Motor neuron (in vitro differentiated cells): ENCODE measurements at regions of chr11 and their contacts with region 1.

Region 1: DNA sequence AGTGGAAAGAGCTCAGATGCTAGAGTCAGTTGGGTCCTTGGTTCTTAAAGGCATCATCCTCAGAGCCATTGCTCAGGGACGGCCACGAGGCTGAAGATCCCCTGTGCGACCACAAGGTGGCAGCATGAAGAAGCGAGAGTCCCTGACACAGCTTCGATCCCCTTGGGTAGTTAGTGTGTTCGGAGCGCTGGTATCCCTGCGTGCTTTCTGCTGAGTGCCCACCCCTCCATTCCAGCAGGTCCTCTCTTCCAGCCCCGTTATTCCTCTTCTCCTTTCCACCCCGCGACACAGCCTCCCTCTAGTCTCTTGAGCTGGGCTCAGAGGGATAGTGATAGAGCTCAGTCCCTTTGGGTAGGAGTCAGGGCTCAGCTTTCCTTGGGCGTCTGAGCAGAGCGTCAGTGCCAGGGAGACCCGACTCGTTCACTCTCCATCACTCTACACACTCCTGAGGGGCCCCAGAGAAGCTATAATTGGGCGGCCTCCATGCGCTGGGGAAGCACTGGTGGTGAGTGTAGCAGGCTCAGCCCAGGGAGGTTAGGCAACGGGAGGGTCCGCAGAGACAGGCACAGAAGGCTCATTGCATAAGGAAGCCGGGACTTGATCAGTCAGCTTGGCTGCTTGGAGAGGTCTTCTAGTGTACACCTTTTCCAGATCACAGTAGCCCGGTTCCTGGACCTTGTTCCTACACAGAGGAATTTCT is at the start of gene OR51D1:
- ATAC-seq: peak; percentile 83 to 100 (median 91)
- H3K4me3 ChIP-seq: no peak within 1 kb of the TSS
- H3K27ac ChIP-seq: no peak within 1 kb of the TSS
- H3K4me1 ChIP-seq: no peaks in the 10 kb centered on the region
- total RNA-seq, gene OR51D1: 0.05 to 0.52 (median 0.13) TPM in 5 of 8 experiments, not detected in the others

Region 2: GRCh38 chr11:4211991-4212390 is 425.1 kb before region 1 on chr11:
- in situ Hi-C with region 1: no loop called
- ATAC-seq: peak in 2 of 8 experiments; percentile 23 to 44
- H3K4me3 ChIP-seq: no peak overlapping the region
- H3K27ac ChIP-seq: no peak overlapping the region
- H3K4me1 ChIP-seq: no peaks in the 10 kb centered on the region

Region 3: DNA sequence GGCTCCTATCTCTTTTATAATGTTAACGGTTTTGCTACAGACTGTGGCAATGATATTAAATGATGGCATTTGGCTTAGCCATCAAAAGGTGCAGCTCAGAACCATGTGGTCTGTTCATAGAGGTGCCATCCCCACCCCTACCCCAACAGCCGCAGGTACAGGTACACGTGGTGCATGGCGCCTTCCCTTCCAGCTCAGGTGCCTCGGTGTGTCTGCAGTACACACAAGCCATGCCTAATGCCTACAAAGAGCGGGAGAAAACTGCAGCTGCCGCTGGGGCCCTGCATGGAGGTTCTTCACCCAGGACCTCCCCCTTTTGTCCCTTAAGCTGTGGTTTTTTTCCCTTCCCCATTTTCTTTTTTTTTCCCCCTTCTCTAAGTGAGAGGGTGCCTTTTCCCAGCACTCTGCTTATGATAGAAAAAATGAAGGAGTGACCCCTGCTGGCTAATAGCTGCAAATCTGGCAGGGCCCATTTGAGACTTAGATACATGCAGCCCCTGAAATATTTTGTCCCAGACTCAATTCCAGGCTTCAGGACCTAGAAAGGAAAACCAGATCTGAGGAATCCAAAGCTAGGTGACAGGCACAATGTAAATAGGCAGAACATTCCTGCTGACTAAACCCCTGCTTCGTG is 85.6 kb before region 1 on chr11:
- in situ Hi-C with region 1: no loop called
- ATAC-seq: peak in 3 of 8 experiments; percentile 65 to 71 (median 67)
- H3K4me3 ChIP-seq: no peak overlapping the region
- H3K27ac ChIP-seq: no peak overlapping the region
- H3K4me1 ChIP-seq: no peaks in the 10 kb centered on the region

Region 4: DNA sequence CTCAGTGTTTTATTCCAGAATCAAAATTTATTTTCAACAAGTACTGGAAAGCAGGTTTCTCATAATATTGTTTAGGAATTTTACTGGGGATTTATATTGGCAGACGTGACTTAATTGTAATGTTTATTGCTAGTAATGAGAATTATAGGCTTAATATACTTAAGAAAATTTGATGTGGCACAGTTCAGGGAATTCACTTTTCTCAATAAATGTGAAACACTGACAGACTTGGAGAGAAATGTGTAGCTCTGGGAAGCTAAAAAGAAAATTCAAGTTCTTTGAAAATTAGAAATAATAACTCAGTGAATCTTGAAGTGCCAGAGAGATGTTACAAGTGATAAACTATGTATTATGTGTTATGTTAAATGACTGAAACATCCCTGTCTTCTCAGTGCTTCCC is 183.9 kb after region 1 on chr11 and contains the start of gene OR51F2:
- in situ Hi-C with region 1: loop called in 3 of 9 experiments (anchors 5 to 10 kb)
- ATAC-seq: no peak
- H3K4me3 ChIP-seq: no peak within 1 kb of the TSS
- H3K27ac ChIP-seq: no peak within 1 kb of the TSS
- H3K4me1 ChIP-seq: no peaks in the 10 kb centered on the region
- total RNA-seq, gene OR51F2: 0.21 to 2.2 (median 1.2) TPM in 5 of 8 experiments, not detected in the others

Region 5: GRCh38 chr11:4826425-4826824 is 189.3 kb after region 1 on chr11:
- in situ Hi-C with region 1: loop called in 3 of 9 experiments (anchors 5 to 10 kb)
- ATAC-seq: peak in 3 of 8 experiments; percentile 64 to 81 (median 69)
- H3K4me3 ChIP-seq: no peak overlapping the region
- H3K27ac ChIP-seq: no peak overlapping the region
- H3K4me1 ChIP-seq: no peaks in the 10 kb centered on the region

Region 6: GRCh38 chr11:4991060-4991459 is 353.9 kb after region 1 on chr11:
- in situ Hi-C with region 1: loop called in 1 of 9 experiments (anchors 25 kb)
- ATAC-seq: peak in 3 of 8 experiments; percentile 80 to 98 (median 96)
- H3K4me3 ChIP-seq: no peak overlapping the region
- H3K27ac ChIP-seq: no peak overlapping the region
- H3K4me1 ChIP-seq: no peaks in the 10 kb centered on the region

Region 7: DNA sequence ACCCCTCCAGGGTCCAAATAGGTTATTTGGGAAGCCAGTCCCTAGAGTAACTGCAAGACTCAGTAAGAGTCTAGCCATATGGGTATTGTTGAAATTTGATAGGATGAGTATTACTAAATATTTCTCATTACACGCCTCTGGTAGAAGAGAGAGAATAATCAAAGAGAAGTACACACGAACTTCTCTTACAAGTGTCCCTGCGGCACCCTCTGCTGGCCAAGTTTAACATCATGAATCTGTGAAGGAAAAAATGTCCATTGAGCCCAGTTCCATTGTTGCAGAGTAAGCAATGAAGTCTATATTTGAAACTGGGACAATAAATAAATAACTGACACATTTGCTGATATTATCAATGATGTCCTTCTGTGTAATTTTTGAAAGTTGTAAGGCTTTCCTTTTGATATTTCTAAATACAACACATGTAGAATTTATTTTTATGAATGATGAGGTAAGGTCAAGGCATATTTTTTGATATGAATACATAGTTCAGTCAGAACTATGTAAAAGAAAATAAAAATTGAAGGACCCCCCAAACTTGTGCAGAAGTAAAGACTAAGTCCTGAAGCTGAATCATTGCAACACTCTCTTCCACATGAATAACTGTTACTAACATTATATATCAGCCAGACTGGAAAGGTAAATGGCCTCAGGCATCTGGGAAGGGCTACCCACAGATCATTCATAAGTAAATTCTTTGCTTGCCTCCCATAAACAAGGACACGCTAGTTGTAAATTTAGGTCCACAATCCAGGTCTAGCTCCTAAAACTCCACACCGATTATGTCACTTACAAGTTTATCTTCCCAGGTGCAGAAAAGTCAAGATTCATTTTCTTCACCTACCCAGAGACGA is 367.5 kb after region 1 on chr11:
- in situ Hi-C with region 1: loop called in 4 of 9 experiments (anchors 10 to 25 kb)
- ATAC-seq: peak in 4 of 8 experiments; percentile 49 to 88 (median 82)
- H3K4me3 ChIP-seq: no peak overlapping the region
- H3K27ac ChIP-seq: no peak overlapping the region
- H3K4me1 ChIP-seq: no peaks in the 10 kb centered on the region

Region 8: DNA sequence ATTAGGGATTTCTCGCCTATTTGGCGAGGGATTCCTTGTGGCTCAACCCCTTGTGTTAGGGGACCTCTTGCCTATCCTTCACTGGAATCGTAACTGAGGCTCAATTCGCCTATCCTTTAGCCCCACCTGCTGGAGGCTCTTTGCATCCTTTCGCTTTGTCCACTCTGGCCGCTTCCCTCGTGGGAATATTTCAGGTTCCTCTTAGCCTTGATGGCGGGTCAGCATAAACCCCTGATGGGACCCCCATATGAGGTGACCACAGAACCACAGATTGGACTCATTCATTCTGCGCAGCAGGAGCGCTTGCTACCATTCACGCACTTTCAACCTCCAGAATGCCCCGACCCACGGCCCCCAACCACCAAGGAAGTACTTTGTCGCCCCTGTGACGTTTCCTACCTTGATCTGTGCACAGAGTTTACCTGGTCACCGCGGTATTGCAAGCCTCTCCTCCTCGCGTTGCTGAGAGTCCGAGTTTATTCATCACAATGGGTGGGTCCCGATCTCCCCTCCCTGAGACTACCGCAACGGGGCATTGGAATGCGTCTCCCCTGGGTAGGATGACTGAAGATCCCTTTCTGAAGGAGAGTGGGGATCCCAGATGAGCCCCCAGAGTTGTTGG is 1171.5 kb after region 1 on chr11 and contains the start of gene OR52N2:
- in situ Hi-C with region 1: loop called in 1 of 9 experiments (anchors 25 kb)
- ATAC-seq: peak; percentile 85 to 100 (median 96)
- H3K4me3 ChIP-seq: peak within 1 kb of the TSS; percentile 12 to 28 (median 13)
- H3K27ac ChIP-seq: no peak within 1 kb of the TSS
- H3K4me1 ChIP-seq: no peaks in the 10 kb centered on the region
- total RNA-seq, gene OR52N2: 0.66 TPM in 1 of 8 experiments, not detected in the others

Region 9: DNA sequence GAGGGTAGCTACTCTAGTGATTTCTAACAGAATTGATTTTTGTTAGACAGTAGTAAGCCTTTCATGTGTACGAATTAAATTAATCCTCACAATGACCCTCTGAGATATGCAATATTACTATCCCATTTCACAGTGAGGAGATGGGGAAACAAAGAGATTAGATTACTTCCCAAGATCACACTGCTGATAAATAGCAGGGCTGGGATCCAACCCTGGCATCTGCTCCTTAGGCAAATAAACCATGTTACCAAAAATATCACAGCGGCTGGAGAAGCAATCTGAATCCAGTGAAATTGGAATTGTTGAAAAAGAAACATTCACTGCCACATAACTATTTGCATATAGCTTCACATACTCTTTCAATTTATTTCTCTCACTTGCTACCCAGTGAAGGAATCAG is 1696.0 kb after region 1 on chr11:
- in situ Hi-C with region 1: loop called in 1 of 9 experiments (anchors 25 kb)
- ATAC-seq: peak in 2 of 8 experiments; percentile 27 to 59
- H3K4me3 ChIP-seq: no peak overlapping the region
- H3K27ac ChIP-seq: no peak overlapping the region
- H3K4me1 ChIP-seq: no peaks in the 10 kb centered on the region